Activated CD8-positive, alpha-beta T cell treated with anti-CD3 and anti-CD28 coated beads for 36 hours (primary cell): ENCODE measurements at regions of chr18 and their contacts with region 1.

Region 1: DNA sequence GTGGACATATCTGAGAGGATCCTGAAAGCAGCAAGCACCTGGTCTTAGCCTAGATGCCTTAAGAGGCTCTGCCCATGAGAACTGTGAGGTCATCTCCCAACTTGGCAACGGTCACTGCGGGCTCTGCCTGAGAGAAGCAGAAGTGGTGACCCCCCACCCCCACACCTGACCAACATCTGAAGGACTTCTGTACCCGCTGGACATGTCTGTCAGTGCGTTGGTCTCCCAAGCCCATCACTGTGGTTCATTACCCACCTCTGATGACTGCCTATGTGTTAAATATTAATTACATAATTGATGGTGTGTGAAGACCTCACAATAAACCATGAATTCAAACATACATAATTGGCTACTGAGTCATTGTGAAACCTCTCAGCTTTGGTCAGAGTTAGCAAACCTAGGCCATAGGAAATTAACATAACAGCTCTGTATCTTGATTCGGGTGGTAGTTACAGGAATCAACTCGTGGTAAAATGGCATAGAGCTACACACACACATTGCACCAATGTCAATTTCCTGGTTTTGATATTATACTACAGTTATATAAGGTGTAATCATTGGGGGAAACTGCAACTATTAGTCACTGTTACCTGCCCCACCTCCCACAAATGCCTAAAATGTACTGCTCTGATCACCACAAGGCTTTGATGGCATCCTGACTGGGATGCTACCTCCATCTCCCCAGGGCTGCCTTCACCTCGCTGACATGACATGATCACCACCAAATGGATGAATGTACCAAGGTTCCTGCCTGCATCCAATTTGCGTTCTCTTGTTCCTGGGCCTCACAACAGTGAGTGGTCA is 4.3 kb upstream of the GALNT1 start:
- DNase-seq: peak; percentile 70
- ATAC-seq: peak; percentile 78
- H3K4me3 Mint-ChIP-seq: no peak overlapping the region
- H3K27ac Mint-ChIP-seq: no peak overlapping the region
- H3K4me1 Mint-ChIP-seq: peaks cover 38% of the 10 kb centered on the region
- H3K27me3 Mint-ChIP-seq: peaks cover 25% of the 10 kb centered on the region
- CTCF ChIP-seq: no peak

Region 2: DNA sequence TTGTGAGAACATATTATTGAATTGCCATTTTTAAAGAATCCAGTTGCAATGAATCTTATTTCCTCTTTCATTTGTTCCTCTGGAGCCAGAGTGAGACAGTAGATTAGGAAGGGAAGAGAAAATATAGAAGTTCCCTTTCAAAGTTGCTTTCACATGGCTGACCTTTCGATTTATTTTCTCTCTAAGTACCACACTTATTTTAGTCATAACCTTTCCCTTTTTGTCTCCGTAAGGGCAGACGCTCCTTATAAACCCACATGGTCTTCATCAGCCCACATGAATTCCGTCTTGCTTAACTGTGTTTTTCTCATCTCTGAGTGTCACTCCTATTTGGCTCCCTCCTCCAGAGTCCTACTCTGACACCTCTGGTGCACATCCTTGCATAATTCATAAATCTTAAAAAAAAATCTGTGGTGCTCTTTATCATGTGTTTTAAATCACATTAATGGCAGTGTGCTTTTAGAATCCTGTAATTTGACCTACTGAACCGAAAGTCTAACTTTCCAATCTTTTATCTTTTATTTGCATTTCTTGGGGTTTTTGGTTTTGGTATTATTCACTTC is 161.7 kb before region 1 on chr18:
- CTCF ChIA-PET with region 1: no interaction called
- POLR2A ChIA-PET with region 1: no interaction called
- intact Hi-C with region 1: loop called (anchors 5 kb)
- DNase-seq: peak; percentile 9
- ATAC-seq: peak; percentile 82
- H3K4me3 Mint-ChIP-seq: peak overlapping the region; percentile 56
- H3K27ac Mint-ChIP-seq: peak overlapping the region; percentile 82
- H3K4me1 Mint-ChIP-seq: peaks cover 31% of the 10 kb centered on the region
- H3K27me3 Mint-ChIP-seq: peaks cover 1% of the 10 kb centered on the region
- CTCF ChIP-seq: no peak

Region 3: GRCh38 chr18:35616664-35617423 is 39.6 kb after region 1 on chr18:
- CTCF ChIA-PET with region 1: no interaction called
- POLR2A ChIA-PET with region 1: interaction called, 9 read pairs
- intact Hi-C with region 1: loop called (anchors 2 kb)
- DNase-seq: peak; percentile 85
- ATAC-seq: peak; percentile 95
- H3K4me3 Mint-ChIP-seq: no peak overlapping the region
- H3K27ac Mint-ChIP-seq: no peak overlapping the region
- H3K4me1 Mint-ChIP-seq: peaks cover 27% of the 10 kb centered on the region
- H3K27me3 Mint-ChIP-seq: no peaks in the 10 kb centered on the region
- CTCF ChIP-seq: no peak